T-cell (primary cell): ENCODE measurements at regions of chr1 and their contacts with region 1.

Region 1: GRCh38 chr1:222095606-222096475 is 354.0 kb upstream of the DUSP10 start:
- DNase-seq: peak; percentile 2 to 78 (median 46)
- ATAC-seq: peak; percentile 71 to 77 (median 73)
- H3K4me3 ChIP-seq: no peak overlapping the region
- H3K4me3 Mint-ChIP-seq: no peak overlapping the region
- H3K27ac ChIP-seq: no peak overlapping the region
- H3K27ac Mint-ChIP-seq: no peak overlapping the region
- H3K4me1 ChIP-seq: no peaks in the 10 kb centered on the region
- H3K4me1 Mint-ChIP-seq: no peaks in the 10 kb centered on the region
- H3K27me3 ChIP-seq: no peaks in the 10 kb centered on the region
- H3K27me3 Mint-ChIP-seq: peaks cover 0 to 3% of the 10 kb centered on the region in 2 donors

Region 2: DNA sequence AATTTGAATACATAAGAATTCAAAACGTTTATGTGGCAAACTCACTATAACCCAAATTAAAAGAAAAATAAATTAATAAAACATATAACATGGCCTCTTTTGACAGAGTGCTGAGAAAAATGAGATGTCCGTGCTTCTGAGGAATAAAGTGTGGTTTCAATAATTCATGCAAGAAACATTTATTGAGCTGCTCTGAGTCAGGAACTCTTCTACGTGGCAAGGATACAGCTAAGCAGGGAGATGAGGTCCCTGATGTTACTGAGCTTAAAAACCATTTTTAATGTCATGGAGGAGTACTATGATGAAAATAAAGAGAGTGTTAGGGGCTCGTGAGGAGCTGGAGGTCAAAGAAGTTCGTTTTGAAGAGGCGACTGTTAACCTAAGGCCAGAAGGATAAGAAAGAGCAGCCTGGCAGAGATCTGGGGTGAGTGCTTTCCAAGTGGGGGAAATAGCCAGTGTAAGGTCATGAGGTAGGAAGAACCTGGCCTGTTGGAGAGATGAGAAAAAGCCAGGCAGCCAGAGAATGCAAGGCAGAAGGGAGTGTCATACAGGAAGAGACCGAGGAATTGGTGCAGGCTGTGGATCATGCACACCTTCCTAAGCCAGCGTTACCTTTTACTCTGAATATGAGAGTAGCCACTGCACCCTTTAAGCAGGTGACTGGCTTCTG is 171.8 kb before region 1 on chr1:
- CTCF ChIA-PET with region 1: no interaction called
- POLR2A ChIA-PET with region 1: no interaction called
- DNase-seq: no peak
- ATAC-seq: no peak
- H3K4me3 ChIP-seq: no peak overlapping the region
- H3K4me3 Mint-ChIP-seq: no peak overlapping the region
- H3K27ac ChIP-seq: no peak overlapping the region
- H3K27ac Mint-ChIP-seq: no peak overlapping the region
- H3K4me1 ChIP-seq: no peaks in the 10 kb centered on the region
- H3K4me1 Mint-ChIP-seq: no peaks in the 10 kb centered on the region
- H3K27me3 ChIP-seq: peaks cover 0 to 10% of the 10 kb centered on the region in 2 experiments
- H3K27me3 Mint-ChIP-seq: peaks cover 0 to 4% of the 10 kb centered on the region in 2 donors

Region 3: DNA sequence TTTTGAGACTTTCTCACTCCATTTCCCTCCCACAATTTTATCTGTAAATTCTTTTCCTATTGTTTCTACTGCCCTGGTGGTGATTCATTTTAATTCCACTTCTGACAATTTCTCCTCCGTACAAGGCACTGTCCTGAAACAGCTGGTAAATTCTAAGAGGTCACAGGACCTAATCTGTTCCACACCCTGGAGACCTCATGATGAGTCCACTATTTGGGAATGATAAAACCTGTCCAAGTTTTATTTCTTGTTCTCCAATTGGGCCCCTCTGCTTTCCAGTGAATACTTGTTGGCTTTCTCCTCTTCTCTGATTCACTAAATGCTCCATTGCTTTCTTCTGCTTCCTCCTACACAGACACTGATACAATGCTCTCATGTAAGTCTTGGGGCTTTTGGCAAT is 10.8 kb before region 1 on chr1:
- CTCF ChIA-PET with region 1: interaction called in 1 of 2 experiments, 10 read pairs
- POLR2A ChIA-PET with region 1: no interaction called
- DNase-seq: no peak
- ATAC-seq: no peak
- H3K4me3 ChIP-seq: no peak overlapping the region
- H3K4me3 Mint-ChIP-seq: no peak overlapping the region
- H3K27ac ChIP-seq: no peak overlapping the region
- H3K27ac Mint-ChIP-seq: no peak overlapping the region
- H3K4me1 ChIP-seq: no peaks in the 10 kb centered on the region
- H3K4me1 Mint-ChIP-seq: no peaks in the 10 kb centered on the region
- H3K27me3 ChIP-seq: no peaks in the 10 kb centered on the region
- H3K27me3 Mint-ChIP-seq: peaks cover 14 to 21% of the 10 kb centered on the region in 2 donors

Region 4: DNA sequence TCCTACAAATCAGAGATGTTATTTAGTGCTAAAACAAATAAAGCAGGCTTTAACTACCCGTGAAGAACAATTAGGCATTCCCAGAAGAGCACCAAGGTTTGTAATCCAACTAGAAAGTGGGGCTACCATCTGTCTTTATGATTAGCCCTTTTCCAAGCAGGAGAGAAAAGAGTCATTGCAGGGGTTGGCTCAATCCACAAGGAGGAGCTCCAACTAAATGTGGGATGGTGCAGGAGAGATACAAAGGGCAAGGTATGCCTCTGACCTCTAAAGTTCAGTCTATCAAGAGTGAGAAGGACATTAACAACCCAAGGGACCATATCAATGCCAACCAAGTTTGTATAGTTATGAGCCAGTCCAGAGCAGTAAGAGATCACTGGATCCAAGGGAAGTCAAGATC is 28.8 kb after region 1 on chr1:
- CTCF ChIA-PET with region 1: interaction called in 1 of 2 experiments, 11 read pairs
- POLR2A ChIA-PET with region 1: no interaction called
- DNase-seq: peak in 1 of 35 experiments; percentile 4
- ATAC-seq: no peak
- H3K4me3 ChIP-seq: no peak overlapping the region
- H3K4me3 Mint-ChIP-seq: no peak overlapping the region
- H3K27ac ChIP-seq: no peak overlapping the region
- H3K27ac Mint-ChIP-seq: no peak overlapping the region
- H3K4me1 ChIP-seq: no peaks in the 10 kb centered on the region
- H3K4me1 Mint-ChIP-seq: peaks cover 0 to 6% (median 2%) of the 10 kb centered on the region in 3 donors
- H3K27me3 ChIP-seq: no peaks in the 10 kb centered on the region
- H3K27me3 Mint-ChIP-seq: peaks cover 0 to 2% of the 10 kb centered on the region in 2 donors

Region 5: DNA sequence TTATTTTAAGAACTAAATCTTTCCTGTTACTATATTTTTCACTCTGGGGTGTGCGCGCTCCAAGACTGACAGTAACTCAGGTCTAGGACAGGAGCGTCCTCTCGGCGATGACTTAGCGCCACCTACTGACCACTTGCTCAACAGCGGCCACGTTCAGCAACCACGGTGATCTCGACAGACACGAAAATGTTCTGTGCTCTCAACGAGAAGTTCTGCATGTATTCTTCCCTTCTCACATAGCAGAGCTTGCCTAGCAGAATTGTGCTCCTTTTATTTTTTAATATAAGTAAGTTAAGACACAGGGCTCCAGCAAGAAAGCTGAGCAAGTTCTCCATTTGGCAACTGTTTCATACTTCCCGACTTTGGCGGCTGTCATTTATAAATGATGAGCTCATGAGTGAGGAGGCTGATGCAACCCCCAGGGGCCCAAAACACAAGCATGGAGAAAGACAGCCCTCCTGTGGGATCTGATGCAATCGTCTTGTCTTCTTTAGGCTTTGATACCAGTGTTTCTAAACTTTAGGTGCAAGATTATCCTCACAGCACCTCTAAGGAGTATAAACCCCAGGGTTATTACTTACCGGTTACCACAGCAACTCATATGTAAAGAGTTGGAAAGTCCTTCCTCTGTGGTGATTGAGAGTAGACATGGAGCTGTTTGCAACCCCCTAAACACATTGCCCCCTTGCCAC is 359.5 kb after region 1 on chr1:
- CTCF ChIA-PET with region 1: interaction called, 22 to 34 read pairs
- POLR2A ChIA-PET with region 1: no interaction called
- DNase-seq: peak; percentile 59 to 92 (median 77)
- ATAC-seq: peak; percentile 97 to 99 (median 98)
- H3K4me3 ChIP-seq: no peak overlapping the region
- H3K4me3 Mint-ChIP-seq: peak overlapping the region in 2 of 3 donors; percentile 10 to 32
- H3K27ac ChIP-seq: no peak overlapping the region
- H3K27ac Mint-ChIP-seq: peak overlapping the region; percentile 69 to 84
- H3K4me1 ChIP-seq: peaks cover 5 to 10% of the 10 kb centered on the region in 2 experiments
- H3K4me1 Mint-ChIP-seq: peaks cover 18 to 26% (median 24%) of the 10 kb centered on the region in 3 donors
- H3K27me3 ChIP-seq: peaks cover 0 to 2% of the 10 kb centered on the region in 2 experiments
- H3K27me3 Mint-ChIP-seq: peaks cover 0 to 4% of the 10 kb centered on the region in 2 donors